Mucosa of descending colon (tissue), 3 donors: ENCODE measurements at regions of chr10 and their contacts with region 1.

Region 1: GRCh38 chr10:71212318-71213126 is at the start of gene UNC5B:
- DNase-seq: peak; percentile 87 to 95 (median 90)
- ATAC-seq: peak; percentile 88
- H3K4me3 ChIP-seq: peak within 1 kb of the TSS; percentile 46
- H3K4me1 ChIP-seq: peaks cover 17% of the 10 kb centered on the region
- CTCF ChIP-seq: no peak
- total RNA-seq, gene UNC5B: 11.0 to 17.4 (median 11.4) TPM

Region 2: DNA sequence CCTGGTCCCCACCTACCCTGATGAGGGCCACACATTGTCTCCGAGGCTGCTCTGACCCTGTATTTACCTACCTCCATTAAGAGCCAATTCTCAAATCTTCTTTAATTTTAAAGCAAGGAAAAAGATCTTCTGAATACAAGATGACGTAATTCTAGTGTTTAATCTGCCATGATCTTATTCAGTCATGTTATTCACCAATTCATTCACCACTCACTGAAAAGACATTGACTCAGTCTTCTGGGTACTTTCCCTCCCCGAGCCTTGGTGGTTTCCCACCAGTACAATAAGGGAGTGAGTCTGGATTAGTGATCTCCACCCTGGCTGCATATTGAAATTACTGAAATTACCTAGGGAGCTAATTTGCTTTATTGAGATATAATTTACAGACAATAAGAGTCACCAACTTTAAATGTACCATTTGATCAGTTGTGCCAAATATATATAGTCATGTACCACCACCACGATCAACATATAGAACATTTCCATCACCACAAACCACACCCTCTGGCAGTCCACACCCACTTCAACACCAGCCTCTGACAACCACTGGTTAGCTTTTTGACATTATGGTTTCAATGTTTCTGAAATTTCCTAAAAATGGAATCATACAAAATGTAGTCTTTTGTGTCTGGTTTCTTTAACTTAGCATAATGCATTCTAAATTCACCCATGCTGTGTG is 117.7 kb before region 1 on chr10:
- intact Hi-C with region 1: no loop called
- DNase-seq: no peak
- ATAC-seq: no peak
- H3K4me3 ChIP-seq: no peak overlapping the region
- H3K4me1 ChIP-seq: no peaks in the 10 kb centered on the region
- CTCF ChIP-seq: no peak

Region 3: GRCh38 chr10:71270301-71271220 is 58.0 kb after region 1 on chr10:
- intact Hi-C with region 1: loop called in 1 of 2 experiments (anchors 10 kb)
- DNase-seq: peak in 1 of 3 donors; percentile 86
- ATAC-seq: peak; percentile 73
- H3K4me3 ChIP-seq: no peak overlapping the region
- H3K4me1 ChIP-seq: peaks cover 2% of the 10 kb centered on the region
- CTCF ChIP-seq: peak; percentile 44